ENCODE measurements at regions of chr1 and their contacts with region 1.

Region 1: GRCh38 chr1:157963713-157964112 is 29.7 kb upstream of the KIRREL1 start:
- DNase-seq: peak; percentile 84
- H3K4me3 ChIP-seq: no peak overlapping the region
- H3K27ac ChIP-seq: no peak overlapping the region
- H3K4me1 ChIP-seq: peaks cover 0 to 7% (median 5%) of the 10 kb centered on the region in 6 donors
- H3K27me3 ChIP-seq: peaks cover 0 to 45% (median 0%) of the 10 kb centered on the region in 7 donors
- CTCF ChIP-seq: peak; percentile 79 to 94 (median 88)
- POLR2A ChIP-seq: no peak

Region 2: GRCh38 chr1:158124999-158125398 is 161.3 kb after region 1 on chr1:
- intact Hi-C with region 1: loop called (anchors 10 kb)
- DNase-seq: peak; percentile 81
- H3K4me3 ChIP-seq: no peak overlapping the region
- H3K27ac ChIP-seq: no peak overlapping the region
- H3K4me1 ChIP-seq: peaks cover 0 to 7% (median 0%) of the 10 kb centered on the region in 6 donors
- H3K27me3 ChIP-seq: peaks cover 0 to 29% (median 3%) of the 10 kb centered on the region in 7 donors
- CTCF ChIP-seq: peak; percentile 78 to 98 (median 94)
- POLR2A ChIP-seq: no peak